Posterior cingulate gyrus (tissue), 11 donors: ENCODE measurements at regions of chr10 and their contacts with region 1.

Region 1: GRCh38 chr10:76303682-76304316 is 872.4 kb downstream of the LRMDA start:
- DNase-seq: peak; percentile 16 to 92 (median 56)

Region 2: GRCh38 chr10:74917481-74918077 is 1386.2 kb before region 1 on chr10:
- intact Hi-C with region 1: no loop called
- DNase-seq: no peak

Region 3: DNA sequence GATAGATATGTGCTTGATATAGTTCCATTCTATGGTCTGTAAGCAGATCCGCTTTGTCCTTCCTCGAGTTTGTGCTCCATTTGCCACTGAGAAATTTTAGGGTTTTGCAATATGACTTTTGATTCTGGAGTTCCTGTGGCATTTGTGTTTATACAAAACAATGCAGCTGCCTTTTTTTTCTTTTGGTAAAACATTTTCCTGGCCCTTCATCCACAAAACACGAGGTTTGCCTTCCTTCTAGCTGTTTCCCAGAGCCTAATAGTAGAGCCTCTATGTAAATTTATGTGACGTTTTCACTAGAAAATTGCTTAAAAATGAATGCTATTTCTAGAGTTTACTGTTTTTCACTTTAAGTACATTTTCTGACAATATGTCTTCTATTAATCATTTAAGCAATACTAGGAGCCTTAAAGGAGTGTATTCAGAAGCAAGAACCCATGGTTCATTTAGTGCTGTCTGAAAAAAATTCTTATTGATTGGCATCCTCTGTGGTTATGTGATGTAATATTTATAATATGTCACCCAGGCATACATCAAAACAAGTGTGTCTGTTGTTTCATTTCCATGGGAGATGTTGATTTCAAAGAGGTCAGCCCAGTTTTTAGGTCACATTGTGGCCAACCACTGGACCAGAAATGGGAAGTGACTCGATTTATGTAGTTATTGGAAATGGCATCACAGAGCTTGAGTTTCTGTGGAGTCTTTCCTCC is 254.1 kb before region 1 on chr10:
- intact Hi-C with region 1: loop called (anchors 10 kb)
- DNase-seq: no peak